ENCODE measurements at regions of chr3 and their contacts with region 1.

Region 1: GRCh38 chr3:47678446-47679338 is 100.0 kb upstream of the CSPG5 start:
- DNase-seq: no peak
- ATAC-seq: peak; percentile 51
- H3K4me3 ChIP-seq: no peak overlapping the region
- H3K27ac ChIP-seq: no peak overlapping the region
- H3K4me1 ChIP-seq: no peaks in the 10 kb centered on the region
- H3K27me3 ChIP-seq: no peaks in the 10 kb centered on the region
- CTCF ChIP-seq: no peak
- EP300 ChIP-seq: no peak
- POLR2A ChIP-seq: no peak
- RAD21 ChIP-seq: no peak

Region 2: GRCh38 chr3:47128137-47128536 is 550.6 kb before region 1 on chr3:
- CTCF ChIA-PET with region 1: no interaction called
- POLR2A ChIA-PET with region 1: no interaction called
- RAD21 ChIA-PET with region 1: no interaction called
- SMC1A ChIA-PET with region 1: no interaction called
- in situ Hi-C with region 1: no loop called
- intact Hi-C with region 1: no loop called
- DNase-seq: no peak
- ATAC-seq: no peak
- H3K4me3 ChIP-seq: no peak overlapping the region
- H3K27ac ChIP-seq: no peak overlapping the region
- H3K4me1 ChIP-seq: no peaks in the 10 kb centered on the region
- H3K27me3 ChIP-seq: no peaks in the 10 kb centered on the region
- CTCF ChIP-seq: no peak
- EP300 ChIP-seq: no peak
- POLR2A ChIP-seq: no peak
- RAD21 ChIP-seq: no peak

Region 3: GRCh38 chr3:47634996-47635395 is 43.7 kb before region 1 on chr3:
- CTCF ChIA-PET with region 1: no interaction called
- POLR2A ChIA-PET with region 1: no interaction called
- RAD21 ChIA-PET with region 1: no interaction called
- SMC1A ChIA-PET with region 1: no interaction called
- in situ Hi-C with region 1: no loop called
- intact Hi-C with region 1: loop called (anchors 5 kb)
- DNase-seq: no peak
- ATAC-seq: peak; percentile 76
- H3K4me3 ChIP-seq: no peak overlapping the region
- H3K27ac ChIP-seq: no peak overlapping the region
- H3K4me1 ChIP-seq: no peaks in the 10 kb centered on the region
- H3K27me3 ChIP-seq: no peaks in the 10 kb centered on the region
- CTCF ChIP-seq: no peak
- EP300 ChIP-seq: no peak
- POLR2A ChIP-seq: no peak
- RAD21 ChIP-seq: no peak